Caco-2 (cell line): ENCODE measurements at regions of chr1 and their contacts with region 1.

Region 1: DNA sequence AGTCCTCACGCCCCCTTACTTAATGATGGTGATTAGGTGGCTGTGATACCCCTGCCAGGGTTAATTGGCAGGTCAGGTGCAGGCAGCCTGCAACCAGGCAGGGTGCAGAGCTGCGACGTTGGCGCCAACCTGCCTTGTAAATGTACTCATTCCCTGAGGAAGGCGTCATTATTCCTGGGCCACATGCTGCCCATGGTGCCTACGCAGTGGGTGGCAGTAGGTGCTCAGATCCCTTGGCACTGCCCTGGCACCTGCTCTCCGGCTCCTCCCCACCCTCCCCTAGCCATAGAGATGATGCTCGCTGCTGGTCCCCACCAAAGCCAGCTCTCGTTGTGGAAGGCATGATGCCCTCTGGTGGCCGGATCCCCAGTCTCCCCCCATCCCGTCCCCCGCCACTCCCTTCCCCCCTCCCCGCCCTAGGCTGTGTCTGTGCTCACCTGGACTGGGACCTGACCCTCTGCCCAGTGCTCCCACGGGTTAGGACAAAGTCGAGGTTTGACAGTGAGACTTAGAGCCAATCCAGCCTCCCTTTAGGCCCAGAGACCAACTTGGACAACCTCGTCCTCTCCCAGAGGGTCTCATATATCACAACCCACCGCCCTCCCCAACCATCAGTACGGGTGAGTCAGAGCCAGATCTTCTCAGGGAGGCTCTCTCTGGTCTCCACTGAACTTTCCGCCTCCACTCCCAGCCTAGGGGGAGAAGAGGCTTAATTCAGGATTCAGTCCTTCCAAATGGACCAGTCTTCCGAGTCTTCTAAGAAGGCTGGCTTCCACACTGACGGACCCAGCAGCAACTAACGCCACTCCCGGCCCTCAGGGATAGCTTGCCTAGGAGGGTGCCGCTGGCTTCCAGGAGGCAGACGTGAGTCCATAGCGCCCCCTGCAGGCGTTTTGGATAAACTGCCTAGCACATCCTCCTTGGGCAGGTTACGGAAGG is 5.7 kb downstream of the KRTCAP2 start:
- DNase-seq: peak; percentile 86 to 89
- H3K4me3 ChIP-seq: peak overlapping the region; percentile 23
- H3K4me3 Mint-ChIP-seq: peak overlapping the region; percentile 66
- H3K27ac Mint-ChIP-seq: peak overlapping the region; percentile 24
- H3K4me1 ChIP-seq: peaks cover 10% of the 10 kb centered on the region; the same call in 1 of the 2 replicates
- H3K4me1 Mint-ChIP-seq: no peaks in the 10 kb centered on the region
- H3K27me3 ChIP-seq: no peaks in the 10 kb centered on the region
- H3K27me3 Mint-ChIP-seq: no peaks in the 10 kb centered on the region
- CTCF ChIP-seq: peak; percentile 79 to 93

Region 2: GRCh38 chr1:155091071-155091709 is 76.2 kb before region 1 on chr1:
- CTCF ChIA-PET with region 1: interaction called, 147 read pairs
- POLR2A ChIA-PET with region 1: interaction called, 7 read pairs
- intact Hi-C with region 1: loop called (anchors 1 kb)
- DNase-seq: peak; percentile 85 to 91
- H3K4me3 ChIP-seq: no peak overlapping the region
- H3K4me3 Mint-ChIP-seq: peak overlapping the region; percentile 47
- H3K27ac Mint-ChIP-seq: no peak overlapping the region
- H3K4me1 ChIP-seq: peaks cover 10% of the 10 kb centered on the region
- H3K4me1 Mint-ChIP-seq: peaks cover 6% of the 10 kb centered on the region
- H3K27me3 ChIP-seq: no peaks in the 10 kb centered on the region
- H3K27me3 Mint-ChIP-seq: no peaks in the 10 kb centered on the region
- CTCF ChIP-seq: peak; percentile 95 to 96

Region 3: DNA sequence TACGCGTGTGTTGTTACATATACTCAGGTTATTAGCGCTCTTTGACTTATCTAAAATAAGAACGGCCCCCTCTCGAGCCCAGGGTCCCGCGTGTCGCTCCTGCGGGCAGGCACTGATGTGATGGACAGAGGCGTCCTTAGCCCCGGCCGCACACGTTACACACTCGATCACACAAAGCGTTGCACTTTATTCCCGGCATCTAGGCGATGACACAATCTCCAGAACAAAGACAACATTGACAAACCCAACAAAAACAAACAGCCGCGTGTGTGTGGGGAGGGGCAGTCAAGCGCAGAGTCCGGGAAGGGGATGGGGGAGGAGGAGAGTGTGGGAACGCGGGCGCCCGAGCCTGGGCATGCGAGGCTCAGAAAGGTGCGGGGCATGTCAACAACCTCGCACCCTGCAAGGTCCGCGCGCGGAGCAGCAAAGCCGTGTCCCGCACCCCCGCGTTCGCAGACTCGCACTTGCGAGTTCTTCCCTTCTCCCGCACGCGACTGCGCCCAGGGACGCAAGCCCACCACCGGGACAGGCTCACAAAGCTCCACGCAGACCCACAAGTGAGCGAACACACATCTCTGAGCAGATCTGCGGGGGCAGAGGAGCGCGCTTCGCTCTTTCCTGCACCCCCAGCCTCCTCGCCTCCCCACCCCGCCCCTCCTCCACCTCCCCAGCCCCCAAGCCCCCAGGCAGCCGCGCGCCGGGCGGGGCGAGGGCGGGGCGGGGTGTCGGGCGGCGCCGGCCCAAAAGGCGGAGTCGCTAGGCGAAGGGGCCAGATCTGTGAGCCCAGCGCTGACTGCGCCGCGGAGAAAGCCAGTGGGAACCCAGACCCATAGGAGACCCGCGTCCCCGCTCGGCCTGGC is 40.1 kb before region 1 on chr1 and contains the start of gene EFNA1:
- CTCF ChIA-PET with region 1: interaction called, 16 read pairs
- POLR2A ChIA-PET with region 1: interaction called, 3 read pairs
- intact Hi-C with region 1: loop called (anchors 1 kb)
- DNase-seq: peak; percentile 82
- H3K4me3 ChIP-seq: peak within 1 kb of the TSS; percentile 68
- H3K4me3 Mint-ChIP-seq: peak within 1 kb of the TSS; percentile 89
- H3K27ac Mint-ChIP-seq: peak within 1 kb of the TSS; percentile 80
- H3K4me1 ChIP-seq: peaks cover 53% of the 10 kb centered on the region
- H3K4me1 Mint-ChIP-seq: peaks cover 42% of the 10 kb centered on the region
- H3K27me3 ChIP-seq: no peaks in the 10 kb centered on the region
- H3K27me3 Mint-ChIP-seq: no peaks in the 10 kb centered on the region
- CTCF ChIP-seq: no peak
- total RNA-seq, gene EFNA1: 42.5 and 47.9 TPM in 2 replicates

Region 4: GRCh38 chr1:155135415-155136028 is 31.9 kb before region 1 on chr1 and contains the start of gene SLC50A1:
- CTCF ChIA-PET with region 1: interaction called, 16 read pairs
- POLR2A ChIA-PET with region 1: no interaction called
- intact Hi-C with region 1: loop called (anchors 2 kb)
- DNase-seq: peak; percentile 96 to 97
- H3K4me3 ChIP-seq: peak within 1 kb of the TSS; percentile 84
- H3K4me3 Mint-ChIP-seq: peak within 1 kb of the TSS; percentile 81
- H3K27ac Mint-ChIP-seq: peak within 1 kb of the TSS; percentile 86
- H3K4me1 ChIP-seq: peaks cover 12% of the 10 kb centered on the region
- H3K4me1 Mint-ChIP-seq: peaks cover 22% of the 10 kb centered on the region
- H3K27me3 ChIP-seq: no peaks in the 10 kb centered on the region
- H3K27me3 Mint-ChIP-seq: no peaks in the 10 kb centered on the region
- CTCF ChIP-seq: peak in 1 of 2 experiments; percentile 15
- total RNA-seq, gene SLC50A1: 38.4 and 43.6 TPM in 2 replicates

Region 5: GRCh38 chr1:155261852-155262673 is 94.6 kb after region 1 on chr1 and contains the start of gene SCAMP3:
- CTCF ChIA-PET with region 1: no interaction called
- POLR2A ChIA-PET with region 1: no interaction called
- intact Hi-C with region 1: no loop called
- DNase-seq: peak; percentile 94 to 97
- H3K4me3 ChIP-seq: peak within 1 kb of the TSS; percentile 65
- H3K4me3 Mint-ChIP-seq: peak within 1 kb of the TSS; percentile 95
- H3K27ac Mint-ChIP-seq: peak within 1 kb of the TSS; percentile 94
- H3K4me1 ChIP-seq: peaks cover 4% of the 10 kb centered on the region
- H3K4me1 Mint-ChIP-seq: peaks cover 23% of the 10 kb centered on the region
- H3K27me3 ChIP-seq: no peaks in the 10 kb centered on the region
- H3K27me3 Mint-ChIP-seq: no peaks in the 10 kb centered on the region
- CTCF ChIP-seq: no peak
- total RNA-seq, gene SCAMP3: 53.4 and 55.9 TPM in 2 replicates

Region 6: GRCh38 chr1:155531624-155532023 is 364.2 kb after region 1 on chr1:
- CTCF ChIA-PET with region 1: no interaction called
- POLR2A ChIA-PET with region 1: no interaction called
- intact Hi-C with region 1: no loop called
- DNase-seq: no peak
- H3K4me3 ChIP-seq: no peak overlapping the region
- H3K4me3 Mint-ChIP-seq: no peak overlapping the region
- H3K27ac Mint-ChIP-seq: no peak overlapping the region
- H3K4me1 ChIP-seq: peaks cover 13% of the 10 kb centered on the region
- H3K4me1 Mint-ChIP-seq: no peaks in the 10 kb centered on the region
- H3K27me3 ChIP-seq: no peaks in the 10 kb centered on the region
- H3K27me3 Mint-ChIP-seq: no peaks in the 10 kb centered on the region
- CTCF ChIP-seq: no peak